ENCODE measurements at regions of chr12 and their contacts with region 1.

Region 1: DNA sequence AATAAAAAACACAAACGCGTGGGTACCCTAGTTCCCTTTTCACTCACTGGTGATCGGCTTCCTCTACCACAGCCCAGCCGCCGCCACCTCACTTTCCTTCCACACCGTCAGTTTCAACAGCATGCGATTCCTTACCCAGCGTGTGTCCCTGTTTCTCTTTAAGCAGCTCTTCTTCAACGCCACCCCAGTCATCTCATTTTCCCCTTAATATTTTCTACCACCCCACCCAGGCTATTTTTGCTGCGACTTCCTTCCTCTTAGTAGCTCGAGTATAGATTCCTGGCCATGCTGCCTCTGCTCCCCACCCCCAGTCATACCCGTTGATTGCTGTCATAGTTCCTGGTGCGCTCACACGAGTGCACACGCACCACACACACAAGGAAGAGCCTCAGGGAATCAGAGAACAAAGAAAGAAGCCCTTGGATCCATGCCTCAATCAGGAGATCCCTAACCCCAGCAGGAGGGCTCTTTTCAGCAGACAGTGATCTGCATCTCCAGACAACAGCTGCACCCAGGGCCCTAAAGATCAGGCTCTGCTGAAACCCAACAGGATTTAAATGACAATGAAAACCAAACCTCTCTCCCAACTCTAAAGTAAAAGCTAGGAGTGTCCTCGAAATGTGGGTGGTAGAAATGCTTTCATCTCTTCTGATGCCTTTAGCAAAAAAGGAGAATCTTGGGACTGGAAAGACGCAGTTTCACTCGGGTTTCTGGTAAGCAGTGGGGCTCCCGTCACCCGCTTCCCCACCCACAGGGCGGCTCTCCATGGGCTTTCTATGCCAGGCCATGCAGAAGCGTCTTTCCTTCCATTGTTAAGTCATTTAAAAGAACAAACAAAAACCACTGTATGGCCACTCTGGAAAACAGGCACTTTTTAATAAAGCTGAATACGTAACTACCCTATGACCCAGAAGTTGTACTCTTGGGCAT is 23.8 kb downstream of the VPS37B start:
- DNase-seq: peak in 3 of 5 donors; percentile 34 to 40 (median 39)
- H3K4me3 ChIP-seq: peak overlapping the region; percentile 25 to 41
- H3K4me3 Mint-ChIP-seq: peak overlapping the region; percentile 84 to 94 (median 91)
- H3K27ac ChIP-seq: peak overlapping the region; percentile 47
- H3K27ac Mint-ChIP-seq: peak overlapping the region; percentile 62 to 97 (median 94)
- H3K4me1 ChIP-seq: peaks cover 70% of the 10 kb centered on the region
- H3K4me1 Mint-ChIP-seq: peaks cover 48 to 82% (median 63%) of the 10 kb centered on the region in 4 donors
- H3K27me3 ChIP-seq: no peaks in the 10 kb centered on the region
- H3K27me3 Mint-ChIP-seq: no peaks in the 10 kb centered on the region

Region 2: DNA sequence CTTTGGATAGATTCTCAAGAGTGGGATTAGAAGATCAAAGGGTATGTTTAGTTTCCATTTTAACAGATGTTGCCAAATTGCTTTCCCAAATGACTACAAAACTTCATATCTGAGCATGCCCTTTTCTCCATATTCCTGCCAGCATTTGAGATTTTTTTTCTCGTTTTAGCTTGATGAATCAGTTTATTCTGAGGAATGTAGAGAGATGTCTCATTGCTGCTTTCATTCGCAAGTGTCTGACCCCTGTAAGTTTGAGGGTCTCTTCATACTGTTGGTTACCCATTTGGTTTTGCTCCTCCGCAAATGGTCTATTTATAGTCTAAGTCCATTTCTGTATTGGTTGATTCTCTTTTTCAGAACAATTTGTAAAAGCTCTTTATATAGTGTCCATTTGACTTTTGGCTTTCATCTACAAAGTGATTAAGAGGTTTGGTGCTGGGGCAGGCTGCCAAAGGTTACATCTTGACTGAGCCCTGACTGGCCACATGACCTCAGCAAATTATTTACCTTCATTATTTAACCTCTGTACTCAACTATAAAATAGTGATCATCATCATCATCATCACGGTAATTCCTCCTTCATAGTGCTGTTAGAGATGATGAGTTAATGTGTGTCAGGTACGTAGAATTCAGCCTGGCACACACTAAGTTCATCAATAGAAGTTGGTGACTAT is 202.6 kb before region 1 on chr12:
- CTCF ChIA-PET with region 1: no interaction called
- POLR2A ChIA-PET with region 1: no interaction called
- intact Hi-C with region 1: no loop called
- DNase-seq: no peak
- H3K4me3 ChIP-seq: no peak overlapping the region
- H3K4me3 Mint-ChIP-seq: no peak overlapping the region
- H3K27ac ChIP-seq: no peak overlapping the region
- H3K27ac Mint-ChIP-seq: no peak overlapping the region
- H3K4me1 ChIP-seq: no peaks in the 10 kb centered on the region
- H3K4me1 Mint-ChIP-seq: no peaks in the 10 kb centered on the region
- H3K27me3 ChIP-seq: no peaks in the 10 kb centered on the region
- H3K27me3 Mint-ChIP-seq: peaks cover 0 to 4% of the 10 kb centered on the region in 2 donors

Region 3: DNA sequence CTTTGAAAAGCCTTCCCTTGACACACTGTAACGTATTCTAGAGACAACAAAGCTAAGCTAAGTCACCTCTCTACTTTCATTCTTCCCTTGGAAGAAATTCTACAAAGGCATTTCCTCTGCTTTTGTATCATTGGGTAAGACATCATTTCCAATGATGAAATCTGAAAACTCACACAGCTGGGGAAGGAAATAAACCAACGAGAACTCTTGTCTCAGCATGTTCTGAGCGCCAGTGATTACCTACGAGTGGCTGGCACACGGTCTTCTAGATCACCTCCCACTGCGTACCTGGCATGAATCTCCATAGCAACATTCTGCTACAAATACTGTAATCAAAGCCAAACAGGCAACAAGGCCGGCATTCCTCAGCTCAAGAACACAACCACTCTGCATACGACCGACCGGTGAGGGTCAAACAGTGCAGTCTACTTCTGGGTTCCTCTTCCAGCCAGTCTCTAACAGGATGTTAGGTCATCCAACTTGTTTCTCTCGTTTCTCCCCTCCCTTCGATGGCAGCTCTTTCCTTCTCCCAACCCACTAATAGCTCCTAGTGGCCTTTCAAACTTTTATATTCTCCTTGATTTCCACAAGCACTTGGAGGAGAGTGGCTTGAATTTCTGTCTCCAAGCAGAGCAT is 16.2 kb after region 1 on chr12:
- CTCF ChIA-PET with region 1: interaction called, 14 read pairs
- POLR2A ChIA-PET with region 1: interaction called, 104 read pairs
- intact Hi-C with region 1: loop called (anchors 2 kb)
- DNase-seq: peak; percentile 72 to 92 (median 86)
- H3K4me3 ChIP-seq: peak overlapping the region; percentile 5 to 57
- H3K4me3 Mint-ChIP-seq: peak overlapping the region; percentile 67 to 94 (median 87)
- H3K27ac ChIP-seq: peak overlapping the region; percentile 77
- H3K27ac Mint-ChIP-seq: peak overlapping the region; percentile 93 to 98 (median 98)
- H3K4me1 ChIP-seq: peaks cover 87% of the 10 kb centered on the region
- H3K4me1 Mint-ChIP-seq: peaks cover 60 to 88% (median 73%) of the 10 kb centered on the region in 4 donors
- H3K27me3 ChIP-seq: no peaks in the 10 kb centered on the region
- H3K27me3 Mint-ChIP-seq: no peaks in the 10 kb centered on the region

Measured in CD4-positive, alpha-beta memory T cell (primary cell).